ENCODE measurements at regions of chr16 and their contacts with region 1.

Region 1: GRCh38 chr16:65154321-65154720 is 32.5 kb upstream of the CDH11 start:
- DNase-seq: no peak
- H3K4me3 ChIP-seq: no peak overlapping the region
- H3K27ac ChIP-seq: no peak overlapping the region
- H3K4me1 ChIP-seq: no peaks in the 10 kb centered on the region
- H3K27me3 ChIP-seq: no peaks in the 10 kb centered on the region
- CTCF ChIP-seq: no peak
- EP300 ChIP-seq: no peak
- POLR2A ChIP-seq: no peak

Region 2: DNA sequence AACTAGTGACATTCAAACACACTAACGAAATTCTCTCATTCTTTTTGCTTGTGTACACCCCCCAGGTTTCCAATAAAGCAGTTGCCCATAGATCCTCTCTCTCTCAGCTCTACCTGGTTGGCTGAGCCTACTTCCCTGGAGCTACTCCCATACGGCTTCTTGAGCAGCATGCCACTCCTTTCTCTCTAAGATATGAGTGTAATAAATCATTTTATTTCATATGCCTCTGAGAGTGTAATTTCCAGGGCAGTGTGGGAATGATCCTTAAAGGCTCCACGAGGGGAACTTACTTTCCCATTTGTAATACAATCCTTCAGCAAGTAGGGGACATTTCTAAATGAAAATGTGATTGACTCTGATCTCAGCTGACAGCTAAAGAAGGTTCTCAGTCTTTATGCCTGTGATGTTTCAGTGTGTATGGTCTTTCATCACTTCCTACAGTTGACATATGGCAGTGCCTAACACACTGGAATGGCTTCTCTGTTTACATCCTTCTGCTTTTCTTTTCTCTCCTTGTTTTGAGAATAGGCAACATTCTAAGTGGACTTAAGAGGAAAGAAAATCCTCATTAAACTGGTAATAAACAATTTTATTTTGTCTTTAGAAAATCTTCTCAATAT is 1923.8 kb before region 1 on chr16:
- in situ Hi-C with region 1: no loop called
- intact Hi-C with region 1: loop called (anchors 5 kb)
- DNase-seq: no peak
- H3K4me3 ChIP-seq: no peak overlapping the region
- H3K27ac ChIP-seq: no peak overlapping the region
- H3K4me1 ChIP-seq: no peaks in the 10 kb centered on the region
- H3K27me3 ChIP-seq: no peaks in the 10 kb centered on the region
- CTCF ChIP-seq: no peak
- EP300 ChIP-seq: no peak
- POLR2A ChIP-seq: no peak

Measured in transverse colon (tissue), 4 donors.